ENCODE measurements at regions of chr4 and their contacts with region 1.

Region 1: DNA sequence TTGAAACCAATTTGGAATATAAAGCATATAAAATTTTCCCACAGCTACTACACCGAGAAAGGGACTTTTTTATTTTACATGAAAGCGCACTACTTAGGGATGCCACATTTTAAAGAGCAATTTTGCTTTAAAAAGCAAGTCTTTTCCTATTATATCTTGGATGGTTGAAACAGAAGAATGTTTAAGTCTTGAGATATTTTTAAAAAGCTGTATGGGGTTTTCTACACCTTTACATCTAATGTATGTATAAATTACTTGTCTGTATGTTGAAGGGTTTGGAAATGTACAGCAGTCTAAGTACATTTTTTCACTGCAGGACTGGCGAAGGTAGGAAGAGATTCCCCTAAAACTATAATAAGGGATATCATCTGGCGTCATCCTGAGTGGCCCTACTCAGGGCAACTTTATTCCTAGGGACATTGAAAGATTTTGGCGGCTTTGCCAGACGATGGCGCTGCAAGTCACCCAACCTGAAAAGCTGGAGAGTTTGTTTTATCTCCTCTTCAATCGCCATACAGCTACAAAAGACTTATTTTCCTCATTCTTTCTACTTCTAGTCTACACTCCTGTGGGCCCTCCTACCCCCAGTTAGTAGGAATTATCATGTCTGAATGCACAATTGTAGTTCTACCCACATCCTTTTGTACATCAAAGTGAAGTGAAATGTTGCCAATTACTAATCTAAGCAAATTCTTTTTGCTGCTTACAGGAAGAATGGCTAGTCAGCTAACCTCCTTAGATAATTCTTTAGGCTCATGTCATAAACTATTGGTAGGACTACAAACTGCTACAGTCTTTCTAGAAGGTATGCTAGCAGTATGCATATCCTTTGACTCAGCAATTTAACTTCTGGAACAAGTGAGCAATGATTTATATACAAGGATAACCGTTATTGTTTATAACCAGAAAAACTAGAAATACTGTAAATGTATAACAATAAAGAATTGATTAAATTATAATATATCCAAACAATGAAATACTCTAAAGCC is 782 bp upstream of the NEK1 start:
- DNase-seq: peak; percentile 71 to 78
- H3K4me3 ChIP-seq: peak overlapping the region; percentile 73
- H3K4me3 Mint-ChIP-seq: peak overlapping the region; percentile 96
- H3K27ac Mint-ChIP-seq: peak overlapping the region; percentile 94
- H3K4me1 ChIP-seq: peaks cover 10% of the 10 kb centered on the region
- H3K4me1 Mint-ChIP-seq: no peaks in the 10 kb centered on the region
- H3K27me3 ChIP-seq: no peaks in the 10 kb centered on the region
- H3K27me3 Mint-ChIP-seq: no peaks in the 10 kb centered on the region
- CTCF ChIP-seq: peak; percentile 60 to 64

Region 2: DNA sequence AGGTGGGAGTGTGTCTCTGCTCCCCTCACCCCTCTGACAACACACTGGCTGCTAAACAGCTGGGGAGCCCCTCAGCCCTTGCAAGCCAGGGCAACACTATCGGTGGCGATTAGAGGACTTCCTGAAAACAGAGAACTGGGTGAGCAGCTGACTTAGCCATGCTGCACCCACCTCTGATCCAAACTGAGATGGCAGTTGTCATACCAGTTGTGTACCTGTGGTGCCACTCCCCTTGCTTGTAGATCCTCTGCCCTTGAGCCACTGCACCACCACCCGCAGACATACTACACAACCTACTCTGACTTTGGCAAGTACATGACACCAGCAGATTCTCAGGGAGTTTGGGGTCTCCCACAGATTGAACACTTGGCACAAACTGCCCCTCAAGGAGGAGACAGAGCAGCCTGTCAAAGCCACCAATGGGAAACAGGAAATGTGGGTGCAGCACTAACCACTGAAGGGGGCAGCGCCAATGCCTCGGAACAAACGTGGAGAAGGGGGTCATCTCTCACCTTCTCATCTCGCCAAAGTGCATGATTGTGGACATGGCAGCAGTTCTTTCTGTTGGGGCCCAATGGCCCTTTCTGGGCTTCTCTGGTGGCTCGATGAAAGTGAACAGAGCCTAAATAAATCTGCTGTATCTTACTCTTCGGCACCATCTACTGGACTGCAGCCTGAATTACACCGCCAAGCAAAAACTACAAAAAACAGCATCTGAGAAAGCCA is 120.6 kb before region 1 on chr4:
- CTCF ChIA-PET with region 1: interaction called, 11 read pairs
- POLR2A ChIA-PET with region 1: no interaction called
- intact Hi-C with region 1: no loop called
- DNase-seq: peak in 1 of 2 experiments; percentile 57
- H3K4me3 ChIP-seq: no peak overlapping the region
- H3K4me3 Mint-ChIP-seq: no peak overlapping the region
- H3K27ac Mint-ChIP-seq: no peak overlapping the region
- H3K4me1 ChIP-seq: no peaks in the 10 kb centered on the region
- H3K4me1 Mint-ChIP-seq: no peaks in the 10 kb centered on the region
- H3K27me3 ChIP-seq: no peaks in the 10 kb centered on the region
- H3K27me3 Mint-ChIP-seq: no peaks in the 10 kb centered on the region
- CTCF ChIP-seq: peak; percentile 74 to 81

Region 3: DNA sequence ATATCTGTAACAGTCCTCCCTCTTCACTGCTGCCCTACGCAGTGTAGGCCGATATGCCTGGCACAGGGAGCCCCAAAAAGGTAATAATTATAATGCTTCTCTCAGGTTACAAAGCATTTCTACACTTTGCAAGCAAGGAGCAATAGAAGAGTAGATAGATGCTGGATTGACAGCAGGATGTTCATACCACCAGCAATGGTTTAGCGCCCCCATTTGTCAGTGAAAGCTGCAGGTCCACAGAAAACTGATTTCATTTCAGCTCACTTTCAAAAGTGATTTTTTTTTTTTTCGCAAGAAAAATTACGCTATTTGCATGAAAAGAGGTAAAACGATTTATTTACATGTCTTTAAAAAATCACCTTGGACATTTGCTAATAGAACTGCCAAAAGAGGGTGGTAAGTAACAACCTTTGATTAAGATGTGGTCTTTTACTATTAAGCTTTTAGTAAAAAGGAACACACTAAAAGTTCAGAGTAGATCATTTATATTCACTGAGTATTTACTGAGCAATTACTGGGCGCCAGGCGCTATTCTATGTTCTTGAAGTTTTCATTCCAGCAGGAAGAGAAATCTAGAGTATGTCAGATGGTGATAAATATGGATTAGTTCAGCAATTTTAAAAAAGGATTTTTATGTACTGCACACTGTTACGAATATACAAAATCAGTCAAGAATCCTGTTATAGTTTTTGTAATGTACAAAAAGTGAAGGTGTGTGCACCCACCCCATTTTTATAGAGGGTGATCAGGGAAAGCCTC is 110.2 kb after region 1 on chr4:
- CTCF ChIA-PET with region 1: interaction called, 15 read pairs
- POLR2A ChIA-PET with region 1: no interaction called
- intact Hi-C with region 1: loop called (anchors 1 kb)
- DNase-seq: peak in 1 of 2 experiments; percentile 39
- H3K4me3 ChIP-seq: no peak overlapping the region
- H3K4me3 Mint-ChIP-seq: no peak overlapping the region
- H3K27ac Mint-ChIP-seq: no peak overlapping the region
- H3K4me1 ChIP-seq: no peaks in the 10 kb centered on the region
- H3K4me1 Mint-ChIP-seq: no peaks in the 10 kb centered on the region
- H3K27me3 ChIP-seq: no peaks in the 10 kb centered on the region
- H3K27me3 Mint-ChIP-seq: no peaks in the 10 kb centered on the region
- CTCF ChIP-seq: peak; percentile 19 to 48

Region 4: GRCh38 chr4:169791527-169792156 is 178.5 kb after region 1 on chr4:
- CTCF ChIA-PET with region 1: no interaction called
- POLR2A ChIA-PET with region 1: no interaction called
- intact Hi-C with region 1: loop called (anchors 1 kb)
- DNase-seq: peak; percentile 58 to 60
- H3K4me3 ChIP-seq: no peak overlapping the region
- H3K4me3 Mint-ChIP-seq: peak overlapping the region; percentile 65
- H3K27ac Mint-ChIP-seq: no peak overlapping the region
- H3K4me1 ChIP-seq: no peaks in the 10 kb centered on the region
- H3K4me1 Mint-ChIP-seq: peaks cover 6% of the 10 kb centered on the region
- H3K27me3 ChIP-seq: no peaks in the 10 kb centered on the region
- H3K27me3 Mint-ChIP-seq: peaks cover 30% of the 10 kb centered on the region
- CTCF ChIP-seq: peak; percentile 49 to 55

Region 5: GRCh38 chr4:170047771-170048354 is 434.7 kb after region 1 on chr4:
- CTCF ChIA-PET with region 1: interaction called, 3 read pairs
- POLR2A ChIA-PET with region 1: no interaction called
- intact Hi-C with region 1: loop called (anchors 1 kb)
- DNase-seq: peak in 1 of 2 experiments; percentile 39
- H3K4me3 ChIP-seq: no peak overlapping the region
- H3K4me3 Mint-ChIP-seq: no peak overlapping the region
- H3K27ac Mint-ChIP-seq: no peak overlapping the region
- H3K4me1 ChIP-seq: no peaks in the 10 kb centered on the region
- H3K4me1 Mint-ChIP-seq: no peaks in the 10 kb centered on the region
- H3K27me3 ChIP-seq: no peaks in the 10 kb centered on the region
- H3K27me3 Mint-ChIP-seq: peaks cover 4% of the 10 kb centered on the region
- CTCF ChIP-seq: peak; percentile 50 to 53